ENCODE measurements at regions of chr4 and their contacts with region 1.

Region 1: DNA sequence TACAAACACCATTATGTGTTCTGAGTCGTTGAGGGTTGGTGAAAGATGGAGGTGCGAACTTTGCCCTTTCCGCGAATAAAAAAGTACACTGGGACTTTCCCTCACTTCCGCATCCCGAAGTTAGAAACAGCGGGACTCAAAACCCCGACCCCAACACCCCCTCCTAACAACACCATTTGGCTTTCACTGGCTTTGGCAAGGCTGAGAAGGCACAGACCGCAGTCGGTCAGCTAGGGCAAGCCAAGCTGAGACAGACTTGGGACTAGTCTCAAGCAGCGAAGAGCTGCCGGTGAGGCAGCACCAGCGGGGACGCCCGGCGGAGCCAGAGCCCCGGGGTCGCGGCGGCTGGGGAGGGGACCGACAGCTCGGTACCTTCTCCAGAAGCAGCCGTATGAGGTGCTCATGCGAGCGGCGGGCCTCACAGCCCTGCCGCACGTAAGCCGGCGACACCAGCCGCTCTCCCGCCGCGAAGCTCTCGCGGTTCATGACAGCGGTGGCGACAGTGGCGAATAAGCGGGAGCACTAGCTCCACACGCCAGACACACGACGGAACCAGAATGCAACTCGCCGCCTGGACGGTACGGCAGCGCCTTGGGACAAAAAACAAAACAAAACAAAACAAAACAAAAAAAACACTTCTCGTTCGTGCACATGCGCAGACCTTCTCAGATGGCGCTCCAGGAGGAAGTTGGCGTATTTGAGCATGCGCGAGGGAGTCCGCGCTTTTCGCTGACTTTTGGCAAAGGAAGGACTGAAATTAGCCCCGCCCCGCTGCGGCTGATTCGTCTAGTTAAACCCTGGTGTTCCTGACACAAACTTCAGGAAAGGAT is at the start of gene SEPSECS:
- DNase-seq: peak; percentile 94 to 96 (median 95)
- H3K4me3 ChIP-seq: peak within 1 kb of the TSS; percentile 96
- H3K4me3 Mint-ChIP-seq: peak within 1 kb of the TSS; percentile 90 to 97 (median 94)
- H3K27ac ChIP-seq: peak within 1 kb of the TSS; percentile 97
- H3K27ac Mint-ChIP-seq: peak within 1 kb of the TSS; percentile 87 to 99 (median 97)
- H3K4me1 ChIP-seq: peaks cover 28% of the 10 kb centered on the region
- H3K4me1 Mint-ChIP-seq: peaks cover 48 to 66% (median 65%) of the 10 kb centered on the region in 3 donors
- H3K27me3 ChIP-seq: no peaks in the 10 kb centered on the region
- H3K27me3 Mint-ChIP-seq: peaks cover 0 to 5% of the 10 kb centered on the region in 2 donors
- total RNA-seq, gene SEPSECS: 8.6 to 10.0 TPM

Region 2: GRCh38 chr4:25234390-25235370 is 74.6 kb after region 1 on chr4:
- CTCF ChIA-PET with region 1: interaction called, 29 read pairs
- POLR2A ChIA-PET with region 1: interaction called, 35 read pairs
- DNase-seq: peak; percentile 24 to 76 (median 56)
- H3K4me3 ChIP-seq: peak overlapping the region; percentile 55
- H3K4me3 Mint-ChIP-seq: peak overlapping the region; percentile 86 to 94 (median 89)
- H3K27ac ChIP-seq: peak overlapping the region; percentile 70
- H3K27ac Mint-ChIP-seq: peak overlapping the region; percentile 87 to 99 (median 95)
- H3K4me1 ChIP-seq: peaks cover 24% of the 10 kb centered on the region
- H3K4me1 Mint-ChIP-seq: peaks cover 38 to 55% (median 50%) of the 10 kb centered on the region in 3 donors
- H3K27me3 ChIP-seq: no peaks in the 10 kb centered on the region
- H3K27me3 Mint-ChIP-seq: no peaks in the 10 kb centered on the region